ENCODE measurements at regions of chr3 and their contacts with region 1.

Region 1: GRCh38 chr3:117510396-117510795 is 800.8 kb downstream of the TUSC7 start:
- DNase-seq: no peak
- ATAC-seq: no peak
- H3K4me3 ChIP-seq: no peak overlapping the region
- H3K27ac ChIP-seq: no peak overlapping the region
- H3K4me1 ChIP-seq: no peaks in the 10 kb centered on the region
- H3K27me3 ChIP-seq: no peaks in the 10 kb centered on the region
- CTCF ChIP-seq: no peak

Region 2: DNA sequence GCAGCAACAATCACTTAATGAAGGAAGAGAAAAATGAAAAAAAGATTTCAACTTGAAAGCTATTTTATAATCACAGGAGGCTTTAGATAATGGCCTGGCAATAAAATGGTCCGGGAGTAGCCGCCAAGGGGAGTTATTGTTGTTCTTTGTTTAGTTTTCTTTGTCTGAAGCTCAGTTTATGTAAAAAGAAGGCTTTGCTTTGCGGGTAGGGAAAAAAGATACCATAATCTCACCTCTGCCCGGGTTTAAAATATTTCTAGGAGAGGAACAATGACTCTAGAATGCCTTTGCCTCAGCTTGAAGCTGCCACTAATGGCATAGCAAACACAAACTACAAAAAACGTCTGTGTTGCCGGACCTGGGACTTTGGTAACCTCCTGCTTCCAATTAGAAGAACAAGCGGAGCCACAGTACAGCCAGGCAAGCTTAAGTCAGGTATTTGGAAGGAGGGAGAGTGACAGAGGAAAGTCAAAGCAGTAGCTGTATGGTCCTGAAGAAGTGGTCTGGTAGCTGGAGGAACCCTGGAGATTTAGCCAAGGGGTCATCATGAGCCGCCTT is 36.3 kb before region 1 on chr3:
- intact Hi-C with region 1: no loop called
- DNase-seq: no peak
- ATAC-seq: no peak
- H3K4me3 ChIP-seq: no peak overlapping the region
- H3K27ac ChIP-seq: no peak overlapping the region
- H3K4me1 ChIP-seq: no peaks in the 10 kb centered on the region
- H3K27me3 ChIP-seq: no peaks in the 10 kb centered on the region
- CTCF ChIP-seq: no peak

Region 3: GRCh38 chr3:117486719-117487716 is 23.4 kb before region 1 on chr3:
- intact Hi-C with region 1: loop called in 1 of 10 experiments (anchors 2 kb)
- DNase-seq: no peak
- ATAC-seq: no peak
- H3K4me3 ChIP-seq: no peak overlapping the region
- H3K27ac ChIP-seq: no peak overlapping the region
- H3K4me1 ChIP-seq: no peaks in the 10 kb centered on the region
- H3K27me3 ChIP-seq: no peaks in the 10 kb centered on the region
- CTCF ChIP-seq: no peak

Measured in heart right ventricle (tissue), 16 donors.